ENCODE measurements at regions of chr7 and their contacts with region 1.

Region 1: DNA sequence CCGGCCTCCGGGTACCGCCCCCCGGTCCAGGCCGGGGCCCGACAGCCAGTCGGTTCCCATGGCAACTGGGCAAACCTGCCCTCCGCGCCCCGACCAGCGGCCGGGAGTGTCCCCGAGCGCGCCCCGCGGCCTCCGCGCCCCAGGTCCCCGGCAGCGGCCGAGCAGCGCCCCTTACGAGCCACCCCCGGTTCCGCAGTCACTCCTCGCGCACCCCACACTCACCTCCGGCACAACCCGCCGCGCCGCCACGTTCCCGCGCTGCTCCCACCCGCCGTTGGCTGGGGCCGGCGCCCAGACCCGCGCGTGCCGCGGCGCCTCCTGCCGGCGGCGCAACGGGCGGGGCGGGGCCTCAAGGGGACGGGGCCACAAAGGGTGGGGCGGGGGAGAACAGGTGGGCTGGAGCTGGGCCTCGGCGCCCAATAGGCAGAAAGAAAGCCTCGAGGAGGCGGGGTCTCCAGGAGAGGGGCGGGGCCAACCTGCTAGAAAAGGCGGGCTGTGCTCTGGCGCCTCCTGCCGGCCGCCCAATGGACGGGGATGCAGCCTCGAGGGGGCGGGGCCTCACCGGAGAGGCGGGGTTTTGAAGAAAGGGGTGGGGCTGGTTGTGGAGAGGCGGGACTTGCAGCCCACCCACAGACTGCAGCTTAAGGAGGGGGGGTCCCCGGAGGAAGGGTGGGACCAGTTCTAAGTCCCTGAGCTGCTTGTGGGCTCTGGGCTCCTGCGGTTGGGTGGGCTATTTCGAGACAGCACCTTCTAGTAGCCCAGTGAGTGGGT is at the start of gene RADIL:
- DNase-seq: peak; percentile 91
- H3K4me3 Mint-ChIP-seq: peak within 1 kb of the TSS; percentile 58
- H3K27ac Mint-ChIP-seq: no peak within 1 kb of the TSS
- H3K4me1 Mint-ChIP-seq: peaks cover 10% of the 10 kb centered on the region
- H3K27me3 Mint-ChIP-seq: peaks cover 59% of the 10 kb centered on the region

Region 2: DNA sequence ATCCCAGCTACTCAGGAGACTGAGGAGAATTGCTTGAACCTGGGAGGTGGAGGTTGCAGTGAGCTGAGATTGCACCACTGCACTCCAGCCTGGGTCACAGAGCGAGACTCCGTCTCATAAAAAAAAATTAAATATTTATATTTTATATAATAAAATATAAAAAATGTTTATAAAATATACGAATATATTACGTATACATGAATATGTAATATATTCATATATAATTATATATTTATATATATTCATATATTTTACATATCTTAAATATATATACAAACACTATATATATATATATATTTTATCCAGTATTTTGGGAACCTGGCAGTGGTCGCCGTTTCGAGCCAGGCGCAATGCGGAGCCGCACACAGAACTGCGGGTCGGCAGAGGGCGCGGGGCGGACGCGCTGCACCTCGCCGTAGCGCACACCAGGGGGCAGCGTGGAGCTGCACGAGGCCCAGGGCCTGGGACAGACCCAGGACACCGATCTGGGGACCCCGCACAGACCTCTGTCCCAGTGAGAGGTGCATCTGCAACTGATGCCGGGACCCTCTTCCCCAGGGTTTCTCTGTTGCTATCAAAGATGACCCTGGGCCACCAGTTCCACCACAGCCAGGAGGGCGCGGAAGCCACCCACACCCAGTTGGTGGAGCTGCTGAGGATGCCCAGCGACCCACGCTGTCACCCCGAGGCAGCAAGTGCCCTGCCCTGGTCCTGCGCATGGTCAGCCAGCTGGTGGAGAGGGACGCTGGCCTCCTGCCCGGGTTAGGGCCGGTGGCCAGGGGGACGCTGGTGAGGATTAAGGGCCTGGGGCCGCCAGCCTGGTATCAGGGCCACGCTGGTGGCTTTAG is 85.5 kb before region 1 on chr7:
- CTCF ChIA-PET with region 1: interaction called, 31 read pairs
- DNase-seq: peak; percentile 69
- H3K4me3 Mint-ChIP-seq: no peak overlapping the region
- H3K27ac Mint-ChIP-seq: no peak overlapping the region
- H3K4me1 Mint-ChIP-seq: peaks cover 7% of the 10 kb centered on the region
- H3K27me3 Mint-ChIP-seq: no peaks in the 10 kb centered on the region

Region 3: GRCh38 chr7:4830176-4830575 is 53.4 kb before region 1 on chr7:
- CTCF ChIA-PET with region 1: interaction called, 15 read pairs
- DNase-seq: peak; percentile 73
- H3K4me3 Mint-ChIP-seq: no peak overlapping the region
- H3K27ac Mint-ChIP-seq: no peak overlapping the region
- H3K4me1 Mint-ChIP-seq: peaks cover 2% of the 10 kb centered on the region
- H3K27me3 Mint-ChIP-seq: no peaks in the 10 kb centered on the region

Region 4: GRCh38 chr7:4849369-4849768 is 34.2 kb before region 1 on chr7:
- CTCF ChIA-PET with region 1: interaction called, 14 read pairs
- DNase-seq: peak; percentile 50
- H3K4me3 Mint-ChIP-seq: no peak overlapping the region
- H3K27ac Mint-ChIP-seq: no peak overlapping the region
- H3K4me1 Mint-ChIP-seq: peaks cover 5% of the 10 kb centered on the region
- H3K27me3 Mint-ChIP-seq: peaks cover 21% of the 10 kb centered on the region

Region 5: DNA sequence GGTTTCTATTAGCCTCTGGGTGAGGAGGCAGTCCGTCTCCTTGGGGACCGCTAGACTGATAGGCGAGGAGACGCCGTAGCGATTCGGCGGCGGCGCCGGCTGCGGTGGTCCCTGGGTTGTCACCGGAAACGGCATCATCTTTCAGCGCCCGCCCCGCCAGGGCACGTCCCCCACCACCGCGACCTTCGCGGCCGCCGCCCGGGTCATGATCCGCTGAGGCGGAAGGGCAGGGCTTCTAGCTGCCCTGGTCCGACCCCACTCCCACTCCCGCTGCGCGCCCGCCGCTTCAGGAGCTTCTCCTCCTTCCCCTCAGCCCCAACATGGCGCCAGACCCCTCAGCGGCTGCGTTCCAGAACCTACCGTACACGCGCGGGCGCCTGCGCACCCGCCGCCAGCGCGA is 21.9 kb before region 1 on chr7 and contains the start of gene PAPOLB:
- CTCF ChIA-PET with region 1: no interaction called
- DNase-seq: peak; percentile 35
- H3K4me3 Mint-ChIP-seq: peak within 1 kb of the TSS; percentile 24
- H3K27ac Mint-ChIP-seq: no peak within 1 kb of the TSS
- H3K4me1 Mint-ChIP-seq: no peaks in the 10 kb centered on the region
- H3K27me3 Mint-ChIP-seq: peaks cover 55% of the 10 kb centered on the region